ENCODE measurements at regions of chr11 and their contacts with region 1.

Region 1: GRCh38 chr11:113532697-113533424 is 57.7 kb upstream of the DRD2 start:
- DNase-seq: peak; percentile 78 to 79
- H3K4me3 ChIP-seq: no peak overlapping the region
- H3K27ac ChIP-seq: no peak overlapping the region
- H3K4me1 ChIP-seq: no peaks in the 10 kb centered on the region
- H3K27me3 ChIP-seq: no peaks in the 10 kb centered on the region
- CTCF ChIP-seq: peak; percentile 65 to 87 (median 72)
- POLR2A ChIP-seq: no peak

Region 2: GRCh38 chr11:113305440-113306336 is 227.2 kb before region 1 on chr11:
- intact Hi-C with region 1: loop called (anchors 2 kb)
- DNase-seq: peak; percentile 78 to 87
- H3K4me3 ChIP-seq: no peak overlapping the region
- H3K27ac ChIP-seq: no peak overlapping the region
- H3K4me1 ChIP-seq: no peaks in the 10 kb centered on the region
- H3K27me3 ChIP-seq: no peaks in the 10 kb centered on the region
- CTCF ChIP-seq: peak; percentile 67 to 96 (median 90)
- POLR2A ChIP-seq: no peak

Measured in thyroid gland (tissue), 4 donors.